Stomach (tissue), 19 donors: ENCODE measurements at regions of chr9 and their contacts with region 1.

Region 1: GRCh38 chr9:98263482-98264357 is 8.3 kb upstream of the TBC1D2 start:
- DNase-seq: peak; percentile 82 to 92
- H3K4me3 ChIP-seq: no peak overlapping the region
- H3K27ac ChIP-seq: no peak overlapping the region
- H3K4me1 ChIP-seq: no peaks in the 10 kb centered on the region
- H3K27me3 ChIP-seq: peaks cover 0 to 2% (median 0%) of the 10 kb centered on the region in 3 donors
- CTCF ChIP-seq: peak in 5 of 7 experiments; percentile 80 to 86 (median 85)
- EP300 ChIP-seq: no peak
- POLR2A ChIP-seq: no peak

Region 2: GRCh38 chr9:98207606-98208005 is 56.1 kb before region 1 on chr9:
- intact Hi-C with region 1: loop called (anchors 5 kb)
- DNase-seq: no peak
- H3K4me3 ChIP-seq: no peak overlapping the region
- H3K27ac ChIP-seq: no peak overlapping the region
- H3K4me1 ChIP-seq: peaks cover 22 to 31% (median 27%) of the 10 kb centered on the region in 4 donors
- H3K27me3 ChIP-seq: no peaks in the 10 kb centered on the region
- CTCF ChIP-seq: no peak
- EP300 ChIP-seq: no peak
- POLR2A ChIP-seq: no peak